Gastrocnemius medialis (tissue), 4 donors: ENCODE measurements at regions of chr5 and their contacts with region 1.

Region 1: DNA sequence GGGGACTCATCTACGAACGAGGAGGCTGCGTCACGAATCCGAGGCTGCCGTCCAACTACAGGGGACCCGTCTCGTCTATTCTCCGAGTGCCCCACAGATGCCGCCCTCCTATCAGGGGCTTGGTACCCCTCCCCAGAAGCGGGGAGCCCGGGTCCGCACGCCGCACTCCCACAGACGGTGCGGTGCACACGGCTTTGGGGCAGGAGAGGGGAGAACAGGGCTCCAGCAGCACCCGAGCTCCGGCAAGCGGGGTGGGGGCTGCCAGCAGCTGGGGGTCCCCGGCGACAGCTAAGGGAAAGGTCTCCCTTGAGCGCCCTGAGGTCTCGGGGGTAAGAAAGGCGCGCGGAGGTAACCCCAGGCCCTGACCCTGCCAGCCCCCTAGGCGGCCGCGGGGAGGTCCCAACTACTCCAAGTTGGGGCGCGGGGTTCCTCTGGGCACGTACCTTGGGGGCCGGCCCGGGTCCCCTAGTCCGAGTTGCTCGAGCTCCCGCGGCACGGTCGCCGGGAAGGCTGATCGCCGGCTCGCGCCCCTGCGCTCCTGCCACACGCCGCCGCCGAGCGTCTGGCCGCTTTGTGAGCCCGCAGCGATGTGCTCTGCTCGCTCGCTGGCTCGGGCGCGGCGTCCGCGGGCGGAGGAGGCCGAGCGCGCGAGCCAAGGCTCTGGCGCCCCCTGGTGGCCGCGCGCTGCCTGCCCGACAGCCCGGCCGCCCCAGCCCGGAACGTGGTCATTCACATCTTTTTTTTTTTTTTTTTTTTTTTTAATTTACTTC is at the start of gene SPOCK1:
- DNase-seq: peak in 1 of 2 donors; percentile 54
- ATAC-seq: peak; percentile 84 to 88
- H3K4me3 ChIP-seq: peak within 1 kb of the TSS; percentile 49 to 69 (median 62)
- H3K27ac ChIP-seq: peak within 1 kb of the TSS in 2 of 4 donors; percentile 57 to 75
- H3K4me1 ChIP-seq: no peaks in the 10 kb centered on the region
- H3K27me3 ChIP-seq: no peaks in the 10 kb centered on the region
- CTCF ChIP-seq: peak in 4 of 5 experiments; percentile 85 to 93 (median 89)
- POLR2A ChIP-seq: peak; percentile 65 to 83
- total RNA-seq, gene SPOCK1: 5.8 to 33.8 (median 25.3) TPM

Region 2: GRCh38 chr5:137220523-137220927 is 278.4 kb before region 1 on chr5:
- in situ Hi-C with region 1: loop called in 1 of 4 experiments (anchors 25 kb)
- intact Hi-C with region 1: no loop called
- DNase-seq: peak in 1 of 2 donors; percentile 27
- ATAC-seq: peak; percentile 86 to 96
- H3K4me3 ChIP-seq: no peak overlapping the region
- H3K27ac ChIP-seq: no peak overlapping the region
- H3K4me1 ChIP-seq: peaks cover 7 to 11% of the 10 kb centered on the region in 2 donors
- H3K27me3 ChIP-seq: no peaks in the 10 kb centered on the region
- CTCF ChIP-seq: peak in 4 of 5 experiments; percentile 19 to 53 (median 38)
- POLR2A ChIP-seq: no peak

Region 3: DNA sequence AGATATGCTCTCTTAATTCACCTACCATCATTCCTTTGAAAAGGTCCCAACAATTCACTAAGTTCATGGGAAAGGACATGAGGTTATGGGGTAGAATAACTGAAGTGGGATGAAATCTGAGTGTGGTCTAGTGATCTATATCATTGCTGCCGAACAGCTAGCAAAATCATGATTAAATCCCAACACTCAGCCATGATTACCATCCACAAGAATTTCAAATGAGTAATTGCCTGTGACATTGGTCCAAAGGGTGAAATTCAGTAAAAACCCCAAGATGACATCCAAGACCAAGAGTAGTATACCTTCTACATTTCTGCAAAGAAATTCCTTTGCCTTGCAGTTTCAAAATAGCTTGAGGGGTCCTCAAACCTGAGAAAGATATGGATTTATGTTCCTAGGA is 225.4 kb before region 1 on chr5:
- in situ Hi-C with region 1: no loop called
- intact Hi-C with region 1: no loop called
- DNase-seq: no peak
- ATAC-seq: no peak
- H3K4me3 ChIP-seq: no peak overlapping the region
- H3K27ac ChIP-seq: no peak overlapping the region
- H3K4me1 ChIP-seq: no peaks in the 10 kb centered on the region
- H3K27me3 ChIP-seq: no peaks in the 10 kb centered on the region
- CTCF ChIP-seq: no peak
- POLR2A ChIP-seq: no peak

Region 4: DNA sequence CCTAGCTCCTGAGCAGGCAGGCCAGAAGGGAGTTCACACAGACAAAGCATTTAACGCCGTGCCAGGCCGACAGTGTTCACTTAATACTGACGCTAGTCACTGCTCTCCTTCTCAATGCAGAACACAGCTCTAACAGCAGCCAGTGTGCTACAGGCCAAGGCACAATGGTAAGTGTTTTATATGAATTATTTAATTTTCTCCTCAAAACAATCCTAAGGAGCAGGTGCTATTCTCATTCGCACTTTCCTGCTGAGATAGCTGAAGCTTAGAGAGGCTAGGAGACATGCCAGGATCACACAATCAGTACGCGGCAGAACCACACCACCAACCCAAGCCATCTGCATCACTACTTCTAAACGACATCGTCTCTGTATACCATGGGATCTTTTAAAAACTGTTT is 170.5 kb before region 1 on chr5:
- in situ Hi-C with region 1: loop called in 2 of 4 experiments (anchors 5 kb)
- intact Hi-C with region 1: no loop called
- DNase-seq: no peak
- ATAC-seq: no peak
- H3K4me3 ChIP-seq: no peak overlapping the region
- H3K27ac ChIP-seq: no peak overlapping the region
- H3K4me1 ChIP-seq: no peaks in the 10 kb centered on the region
- H3K27me3 ChIP-seq: no peaks in the 10 kb centered on the region
- CTCF ChIP-seq: no peak
- POLR2A ChIP-seq: no peak

Region 5: DNA sequence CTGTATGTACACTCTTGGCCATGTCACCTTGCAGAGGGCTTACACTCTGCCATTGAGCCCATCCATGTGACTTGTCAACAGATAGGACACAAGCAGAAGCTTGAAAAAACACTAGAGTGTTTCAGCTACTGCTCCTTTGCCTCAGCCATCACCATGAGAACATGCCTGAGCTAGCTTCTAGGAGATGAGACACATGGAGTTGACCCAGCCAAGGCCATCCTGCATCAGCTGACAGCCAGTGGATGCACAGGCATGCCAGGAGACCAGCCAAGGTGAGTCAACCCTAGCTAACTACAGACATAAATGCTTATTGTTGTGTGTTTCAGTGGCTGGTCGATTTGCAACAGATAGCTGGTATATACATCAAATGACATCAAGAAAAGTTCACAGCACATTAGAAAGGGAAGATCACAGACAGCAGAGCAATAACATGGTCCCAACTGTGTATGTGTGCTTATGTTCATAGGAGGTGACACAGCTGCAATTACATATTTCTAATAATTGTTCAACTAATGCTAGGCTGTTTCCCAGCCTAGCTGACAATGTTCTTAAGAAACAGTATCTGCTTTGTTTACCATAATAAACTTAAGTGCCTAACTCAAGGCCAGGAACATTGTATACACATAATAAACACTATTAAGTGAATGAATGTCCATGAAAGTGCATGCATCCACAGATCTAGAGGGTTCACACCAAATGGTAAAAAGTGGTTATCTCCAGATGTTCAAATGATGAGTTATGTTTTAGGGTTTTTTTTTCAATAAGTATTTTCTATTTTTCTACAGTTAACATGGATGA is 105.5 kb before region 1 on chr5:
- in situ Hi-C with region 1: no loop called
- intact Hi-C with region 1: loop called (anchors 5 kb)
- DNase-seq: peak in 1 of 2 donors; percentile 24
- ATAC-seq: no peak
- H3K4me3 ChIP-seq: no peak overlapping the region
- H3K27ac ChIP-seq: no peak overlapping the region
- H3K4me1 ChIP-seq: peaks cover 12 to 27% of the 10 kb centered on the region in 2 donors
- H3K27me3 ChIP-seq: no peaks in the 10 kb centered on the region
- CTCF ChIP-seq: no peak
- POLR2A ChIP-seq: no peak

Region 6: GRCh38 chr5:137478043-137478442 is 20.9 kb before region 1 on chr5:
- in situ Hi-C with region 1: no loop called
- intact Hi-C with region 1: no loop called
- DNase-seq: peak; percentile 30 to 46
- ATAC-seq: peak; percentile 94 to 96
- H3K4me3 ChIP-seq: no peak overlapping the region
- H3K27ac ChIP-seq: peak overlapping the region; percentile 21 to 81 (median 74)
- H3K4me1 ChIP-seq: peaks cover 24 to 27% of the 10 kb centered on the region in 2 donors
- H3K27me3 ChIP-seq: no peaks in the 10 kb centered on the region
- CTCF ChIP-seq: no peak
- POLR2A ChIP-seq: peak in 1 of 2 donors; percentile 19

Region 7: DNA sequence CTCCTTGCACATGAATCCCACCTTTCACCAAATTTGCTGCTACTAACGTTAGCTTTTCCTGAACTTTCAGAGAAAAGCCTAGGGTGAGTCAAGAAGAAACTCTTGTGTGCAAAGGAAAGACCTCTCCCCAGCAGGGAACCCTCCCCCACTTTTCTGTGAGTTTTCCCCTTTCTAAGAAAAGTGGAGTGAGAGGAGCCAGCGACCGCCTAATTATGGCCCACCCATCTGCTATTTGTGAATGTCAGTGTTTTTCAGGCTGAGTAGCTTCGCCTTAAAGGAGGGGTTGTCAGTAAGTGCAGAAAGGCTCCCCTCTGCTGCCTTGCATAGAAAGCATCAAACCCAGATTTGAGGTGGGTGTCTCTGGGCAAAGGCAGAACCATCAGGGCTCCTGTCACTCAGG is 47.0 kb after region 1 on chr5:
- in situ Hi-C with region 1: no loop called
- intact Hi-C with region 1: no loop called
- DNase-seq: no peak
- ATAC-seq: no peak
- H3K4me3 ChIP-seq: no peak overlapping the region
- H3K27ac ChIP-seq: no peak overlapping the region
- H3K4me1 ChIP-seq: no peaks in the 10 kb centered on the region
- H3K27me3 ChIP-seq: no peaks in the 10 kb centered on the region
- CTCF ChIP-seq: no peak
- POLR2A ChIP-seq: no peak

Region 8: GRCh38 chr5:137629646-137630045 is 130.7 kb after region 1 on chr5:
- in situ Hi-C with region 1: no loop called
- intact Hi-C with region 1: no loop called
- DNase-seq: no peak
- ATAC-seq: peak; percentile 66 to 77
- H3K4me3 ChIP-seq: no peak overlapping the region
- H3K27ac ChIP-seq: no peak overlapping the region
- H3K4me1 ChIP-seq: peaks cover 11 to 29% of the 10 kb centered on the region in 2 donors
- H3K27me3 ChIP-seq: no peaks in the 10 kb centered on the region
- CTCF ChIP-seq: peak; percentile 87 to 93 (median 91)
- POLR2A ChIP-seq: no peak